ENCODE measurements at regions of chr6 and their contacts with region 1.

Region 1: DNA sequence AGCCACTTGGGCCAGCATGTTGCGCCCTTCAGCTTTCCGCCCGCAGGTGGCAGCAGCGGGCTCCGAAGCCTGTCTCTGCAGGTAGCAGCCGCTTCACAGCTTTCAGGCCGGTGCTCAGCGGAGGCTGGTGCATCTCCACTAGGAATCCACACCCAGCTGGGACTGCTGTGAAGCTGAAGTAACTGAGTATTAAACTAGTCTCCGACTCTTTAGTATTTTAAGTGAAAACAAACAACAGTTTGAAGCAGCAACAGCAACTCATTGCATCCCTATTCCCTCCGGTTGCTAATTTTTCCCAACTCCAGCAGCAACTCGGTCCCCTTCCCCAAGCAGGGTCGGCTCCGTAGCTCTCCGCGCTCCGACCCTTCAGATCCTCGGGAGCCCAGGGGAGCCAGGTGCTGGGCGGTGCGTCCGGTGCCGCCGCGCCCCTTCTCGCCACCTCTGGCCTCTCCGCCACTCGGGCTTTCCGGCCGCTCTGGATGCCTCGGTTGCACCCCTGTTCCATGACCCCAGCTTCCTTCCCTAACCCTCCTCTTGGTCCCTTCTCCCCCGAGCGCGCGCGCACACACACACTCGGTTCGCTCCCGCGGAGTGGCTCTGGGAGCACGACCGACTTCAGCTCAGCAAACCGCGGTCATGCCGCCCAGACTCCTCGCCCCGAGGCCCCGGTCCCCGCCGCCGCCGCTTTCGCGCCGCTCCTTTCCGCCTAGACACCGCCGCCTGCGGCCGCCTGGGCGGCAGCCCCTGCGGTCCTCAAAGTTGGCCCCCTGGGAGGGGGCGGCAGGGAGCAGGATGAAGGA is 768 bp upstream of the NKAIN2 start:
- DNase-seq: peak; percentile 54
- H3K4me3 ChIP-seq: no peak overlapping the region
- H3K27ac ChIP-seq: no peak overlapping the region
- H3K4me1 ChIP-seq: no peaks in the 10 kb centered on the region
- CTCF ChIP-seq: peak; percentile 89

Region 2: GRCh38 chr6:123215211-123215610 is 587.7 kb before region 1 on chr6:
- CTCF ChIA-PET with region 1: no interaction called
- POLR2A ChIA-PET with region 1: no interaction called
- intact Hi-C with region 1: no loop called
- DNase-seq: no peak
- H3K4me3 ChIP-seq: no peak overlapping the region
- H3K27ac ChIP-seq: no peak overlapping the region
- H3K4me1 ChIP-seq: no peaks in the 10 kb centered on the region
- CTCF ChIP-seq: no peak

Region 3: GRCh38 chr6:123636782-123637181 is 166.1 kb before region 1 on chr6 and contains the start of gene TRDN:
- CTCF ChIA-PET with region 1: no interaction called
- POLR2A ChIA-PET with region 1: no interaction called
- intact Hi-C with region 1: no loop called
- DNase-seq: no peak
- H3K4me3 ChIP-seq: no peak within 1 kb of the TSS
- H3K27ac ChIP-seq: no peak within 1 kb of the TSS
- H3K4me1 ChIP-seq: no peaks in the 10 kb centered on the region
- CTCF ChIP-seq: no peak
- total RNA-seq, gene TRDN: 0.10 TPM in 1 of 2 replicates, not detected in the other

Region 4: GRCh38 chr6:123763561-123764303 is 39.2 kb before region 1 on chr6:
- CTCF ChIA-PET with region 1: no interaction called
- POLR2A ChIA-PET with region 1: no interaction called
- intact Hi-C with region 1: no loop called
- DNase-seq: no peak
- H3K4me3 ChIP-seq: no peak overlapping the region
- H3K27ac ChIP-seq: no peak overlapping the region
- H3K4me1 ChIP-seq: no peaks in the 10 kb centered on the region
- CTCF ChIP-seq: no peak

Region 5: GRCh38 chr6:123855506-123855905 is 52.6 kb after region 1 on chr6:
- CTCF ChIA-PET with region 1: no interaction called
- POLR2A ChIA-PET with region 1: no interaction called
- intact Hi-C with region 1: no loop called
- DNase-seq: no peak
- H3K4me3 ChIP-seq: no peak overlapping the region
- H3K27ac ChIP-seq: no peak overlapping the region
- H3K4me1 ChIP-seq: no peaks in the 10 kb centered on the region
- CTCF ChIP-seq: no peak

Region 6: GRCh38 chr6:124854338-124854922 is 1051.5 kb after region 1 on chr6:
- CTCF ChIA-PET with region 1: no interaction called
- POLR2A ChIA-PET with region 1: no interaction called
- intact Hi-C with region 1: loop called (anchors 5 kb)
- DNase-seq: peak; percentile 5
- H3K4me3 ChIP-seq: no peak overlapping the region
- H3K27ac ChIP-seq: no peak overlapping the region
- H3K4me1 ChIP-seq: no peaks in the 10 kb centered on the region
- CTCF ChIP-seq: peak; percentile 75